ENCODE measurements at regions of chr17 and their contacts with region 1.

Region 1: DNA sequence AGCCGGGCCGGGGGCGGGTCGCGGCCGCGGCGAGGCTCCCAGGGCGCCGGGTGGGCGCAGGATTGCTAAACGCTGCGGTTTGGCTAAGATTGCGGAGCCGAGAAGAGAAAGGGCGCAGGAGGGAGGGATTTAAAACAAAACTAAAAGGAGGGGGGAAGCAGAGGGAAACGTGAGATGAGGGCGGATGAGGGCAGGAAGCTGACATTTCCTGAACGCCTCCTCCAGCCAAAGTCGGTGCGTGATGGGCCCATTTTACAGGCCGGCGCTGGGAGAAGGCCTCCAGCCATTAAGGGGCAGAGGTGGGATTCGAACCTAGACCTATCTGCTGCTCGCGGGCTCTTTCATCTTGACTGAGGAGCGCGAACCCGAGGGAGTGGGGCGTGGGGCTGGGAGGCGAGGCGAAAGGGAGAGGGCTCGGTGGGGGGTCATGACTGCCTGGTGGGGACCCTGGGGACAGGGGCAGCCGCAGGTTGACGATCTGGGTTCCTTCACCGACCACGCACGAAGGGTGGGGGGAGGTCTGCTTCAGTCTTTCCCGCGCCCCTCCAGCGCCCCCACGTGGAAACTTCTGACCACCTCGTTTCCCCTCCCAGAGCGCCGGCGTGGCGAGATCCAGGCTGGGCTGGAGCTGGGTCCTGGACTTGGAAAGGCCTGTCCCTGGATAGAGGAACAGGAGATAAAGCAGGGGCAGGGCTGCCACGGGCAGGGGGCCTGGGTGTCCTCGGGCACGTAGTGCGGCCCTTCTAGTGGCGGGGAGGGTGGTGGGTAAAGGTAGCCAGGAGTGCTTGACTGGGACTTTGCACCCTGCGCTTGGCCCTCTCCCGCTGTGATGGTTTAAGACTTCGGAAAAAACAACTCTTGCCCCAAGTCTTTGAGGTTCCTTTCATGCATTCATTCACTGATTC is 3.8 kb upstream of the TAC4 start:
- DNase-seq: peak; percentile 81 to 89 (median 83)
- ATAC-seq: peak; percentile 65 to 88 (median 80)
- H3K4me3 ChIP-seq: peak overlapping the region; percentile 40 to 82 (median 64)
- H3K27ac ChIP-seq: peak overlapping the region in 9 of 12 donors; percentile 20 to 72 (median 58)
- H3K4me1 ChIP-seq: peaks cover 0 to 24% (median 13%) of the 10 kb centered on the region in 12 donors
- H3K27me3 ChIP-seq: no peaks in the 10 kb centered on the region
- CTCF ChIP-seq: peak; percentile 70 to 86 (median 77)
- POLR2A ChIP-seq: no peak

Region 2: DNA sequence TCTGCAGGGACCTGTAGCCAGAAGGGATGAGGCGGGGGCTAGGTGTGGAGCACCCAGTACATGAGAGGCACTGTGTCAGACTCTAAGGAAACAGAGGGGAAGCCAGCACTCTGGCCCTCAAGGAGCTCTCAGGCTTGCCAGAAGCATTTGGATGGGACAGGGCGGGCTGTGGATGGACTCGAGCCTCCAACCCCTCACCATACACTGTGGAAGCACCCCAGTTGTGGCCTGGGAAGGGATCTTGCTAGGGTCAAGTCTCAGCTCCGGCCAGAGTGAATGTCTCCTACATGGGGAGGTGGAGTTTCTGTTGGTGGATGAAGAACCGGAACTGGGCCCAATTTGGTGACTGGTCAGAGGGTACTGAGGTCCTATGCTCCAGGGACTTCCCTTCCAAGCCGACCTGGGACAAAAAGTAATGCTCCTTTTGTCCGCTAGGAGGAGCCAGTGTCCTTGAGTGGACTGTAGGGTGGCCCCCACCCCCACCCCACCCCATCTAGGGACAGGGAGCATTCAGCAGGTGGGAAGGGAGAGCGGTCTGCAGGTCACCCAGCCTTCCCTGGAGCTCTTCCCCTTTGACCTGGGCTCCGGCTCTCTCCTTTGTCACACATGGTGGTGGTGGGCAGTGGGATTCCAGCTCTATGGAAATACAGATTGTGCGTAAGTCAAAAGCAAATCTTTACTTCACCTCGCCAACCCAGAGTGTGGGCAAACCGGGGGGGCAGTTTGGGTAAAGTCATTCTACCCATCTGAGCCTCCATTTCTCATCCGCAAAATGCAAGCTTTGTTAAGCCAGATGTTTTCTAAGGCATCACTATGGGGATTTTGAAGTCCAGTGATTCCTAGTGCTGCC is 416.6 kb before region 1 on chr17:
- intact Hi-C with region 1: loop called in 1 of 10 experiments (anchors 10 kb)
- DNase-seq: peak in 1 of 5 donors; percentile 19
- ATAC-seq: peak; percentile 53 to 76 (median 66)
- H3K4me3 ChIP-seq: no peak overlapping the region
- H3K27ac ChIP-seq: no peak overlapping the region
- H3K4me1 ChIP-seq: no peaks in the 10 kb centered on the region
- H3K27me3 ChIP-seq: peaks cover 2 to 30% (median 19%) of the 10 kb centered on the region in 9 donors
- CTCF ChIP-seq: peak; percentile 53 to 80 (median 73)
- POLR2A ChIP-seq: no peak

Region 3: DNA sequence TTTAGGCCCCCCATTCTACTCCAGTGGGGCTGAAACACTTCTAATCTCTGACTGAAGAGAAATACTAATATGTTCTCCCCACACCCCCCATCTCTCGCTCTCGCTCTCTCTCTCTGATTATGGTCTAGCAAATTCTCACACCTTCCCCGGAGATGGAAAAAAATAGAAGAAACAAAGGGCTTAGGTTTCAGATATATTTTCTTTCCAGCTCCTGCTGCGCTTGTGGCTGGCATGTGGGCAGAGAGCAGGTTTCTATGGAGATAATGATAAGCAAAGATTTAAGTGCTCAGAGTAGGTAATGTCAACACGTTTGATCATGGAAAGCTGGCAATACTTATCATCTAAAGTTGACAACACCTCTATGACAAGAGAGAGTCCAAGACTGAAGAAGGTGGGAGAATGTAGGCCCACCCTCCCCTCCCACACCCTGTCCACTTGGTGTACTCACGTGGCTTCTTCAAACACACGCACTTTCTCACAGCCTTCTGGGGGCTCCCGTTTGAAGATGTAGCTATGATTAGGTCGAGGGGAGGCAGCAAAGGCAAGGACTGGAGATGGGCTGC is 135.8 kb before region 1 on chr17:
- intact Hi-C with region 1: loop called in 2 of 10 experiments (anchors 5 kb)
- DNase-seq: no peak
- ATAC-seq: peak in 1 of 4 donors; percentile 15
- H3K4me3 ChIP-seq: no peak overlapping the region
- H3K27ac ChIP-seq: peak overlapping the region in 5 of 12 donors; percentile 7 to 73 (median 10)
- H3K4me1 ChIP-seq: peaks cover 0 to 26% (median 0%) of the 10 kb centered on the region in 12 donors
- H3K27me3 ChIP-seq: no peaks in the 10 kb centered on the region
- CTCF ChIP-seq: no peak
- POLR2A ChIP-seq: no peak

Region 4: GRCh38 chr17:49952209-49952911 is 100.7 kb after region 1 on chr17:
- intact Hi-C with region 1: no loop called
- DNase-seq: peak; percentile 46 to 82 (median 60)
- ATAC-seq: peak in 3 of 4 donors; percentile 70 to 79 (median 74)
- H3K4me3 ChIP-seq: no peak overlapping the region
- H3K27ac ChIP-seq: no peak overlapping the region
- H3K4me1 ChIP-seq: peaks cover 0 to 3% (median 0%) of the 10 kb centered on the region in 12 donors
- H3K27me3 ChIP-seq: peaks cover 0 to 60% (median 17%) of the 10 kb centered on the region in 9 donors
- CTCF ChIP-seq: peak; percentile 43 to 82 (median 69)
- POLR2A ChIP-seq: no peak

Measured in heart left ventricle (tissue), 16 donors.